ENCODE measurements at regions of chr12 and their contacts with region 1.

Region 1: DNA sequence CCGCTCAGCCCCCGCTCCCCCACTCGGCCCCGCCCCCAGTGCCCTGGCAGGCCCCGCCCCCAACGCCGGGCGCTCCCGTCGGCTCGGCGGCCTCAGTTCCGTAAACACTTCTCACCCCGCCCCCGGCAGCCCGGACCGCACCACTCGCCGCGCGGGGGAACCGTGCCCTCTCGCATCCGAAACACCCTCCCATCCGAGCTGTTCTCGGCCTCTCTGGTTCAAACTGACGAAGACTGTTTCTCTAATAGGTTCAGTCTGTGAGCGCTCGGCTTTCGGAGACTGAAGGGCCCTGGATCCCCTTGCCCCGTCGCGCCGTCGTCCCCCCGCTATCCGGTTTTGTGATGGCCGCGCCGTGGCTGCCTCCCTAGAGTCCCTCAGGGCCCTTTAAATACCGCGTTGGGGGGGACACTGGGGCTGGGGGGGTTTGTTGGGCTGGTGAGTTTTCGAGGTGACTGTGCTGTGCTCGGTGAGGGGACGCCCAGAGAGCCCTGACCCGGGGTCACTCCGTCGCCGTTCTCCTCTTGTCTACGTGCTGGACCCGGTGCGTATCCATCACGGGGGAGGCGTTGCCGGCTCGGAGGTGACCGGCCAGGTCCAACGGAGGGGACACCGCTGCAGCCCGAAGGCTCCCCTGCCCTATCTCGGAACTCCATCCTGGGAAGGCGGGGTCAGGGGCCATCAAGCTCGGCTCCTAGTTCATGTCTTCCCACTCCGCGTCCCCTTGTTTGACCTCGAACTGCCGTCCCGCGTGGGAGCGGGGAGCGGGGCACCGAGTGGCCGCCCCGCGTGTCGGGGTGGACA is at the start of gene TCP11L2:
- DNase-seq: peak; percentile 94
- ATAC-seq: peak; percentile 88
- total RNA-seq, gene TCP11L2: 122 TPM

Region 2: DNA sequence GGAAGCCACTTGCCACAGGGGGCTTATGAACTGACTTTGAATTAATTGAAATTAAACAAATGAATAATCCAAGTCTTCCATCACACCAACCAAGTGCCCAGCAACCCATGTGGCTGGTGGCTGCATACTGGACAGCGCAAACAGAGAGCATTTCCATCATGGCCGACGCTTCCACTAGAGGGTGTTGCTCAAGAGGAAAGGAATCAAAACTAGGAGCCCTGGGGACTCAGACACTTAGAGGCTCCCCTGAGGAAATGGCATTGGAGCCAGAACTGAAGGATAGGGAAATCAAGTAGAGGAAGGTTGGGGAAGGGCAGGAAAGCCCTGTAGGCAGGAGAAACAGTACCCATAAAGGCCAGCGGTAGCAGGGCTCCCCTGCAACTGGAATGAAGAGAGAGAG is 113.3 kb before region 1 on chr12:
- intact Hi-C with region 1: no loop called
- DNase-seq: no peak
- ATAC-seq: no peak

Region 3: DNA sequence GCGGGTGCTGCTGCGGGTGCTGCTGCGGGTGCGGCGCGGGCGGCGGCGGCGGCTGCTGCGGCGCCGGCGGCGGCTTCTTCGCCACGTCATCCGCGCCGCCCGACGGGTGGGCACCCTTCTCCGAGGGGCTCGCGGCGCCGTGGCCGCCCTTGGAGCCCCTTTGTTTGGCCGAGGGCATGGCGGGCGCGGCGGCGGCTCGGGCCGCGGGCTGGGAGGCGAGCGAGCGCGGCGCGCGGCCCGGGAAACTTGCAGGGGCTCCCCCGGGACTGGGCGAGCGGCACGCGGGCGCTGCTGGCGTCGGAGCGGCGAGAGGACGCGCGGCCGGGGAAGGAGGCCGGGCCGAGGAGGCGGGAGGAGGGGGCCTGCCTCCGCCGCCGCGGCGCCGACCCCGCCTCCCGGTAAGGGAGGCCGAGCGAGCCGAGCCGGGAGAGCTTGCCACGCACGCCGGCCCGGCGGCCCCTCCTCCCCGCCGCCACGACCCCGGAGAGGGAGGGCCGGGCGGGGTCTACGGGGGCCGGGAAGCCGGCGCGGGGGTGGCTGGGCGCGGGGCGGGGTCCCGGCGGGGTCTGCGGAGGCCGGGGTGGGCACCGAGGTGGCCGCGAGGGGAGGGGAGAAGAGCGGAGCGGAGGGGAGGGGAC is 54.8 kb before region 1 on chr12 and contains the start of gene CKAP4:
- intact Hi-C with region 1: loop called (anchors 10 kb)
- DNase-seq: peak; percentile 89
- ATAC-seq: peak; percentile 86
- total RNA-seq, gene CKAP4: 35.0 TPM

Region 4: GRCh38 chr12:106345739-106346138 is 43.1 kb after region 1 on chr12:
- intact Hi-C with region 1: loop called (anchors 5 kb)
- DNase-seq: no peak
- ATAC-seq: peak; percentile 36